Panc1 (cell line): ENCODE measurements at regions of chr10 and their contacts with region 1.

Region 1: GRCh38 chr10:101441541-101442455 is 87.8 kb downstream of the BTRC start:
- DNase-seq: peak; percentile 54
- ATAC-seq: peak; percentile 97
- H3K4me3 ChIP-seq: no peak overlapping the region
- H3K27ac ChIP-seq: no peak overlapping the region
- H3K4me1 ChIP-seq: peaks cover 6% of the 10 kb centered on the region; the same call in 1 of the 2 replicates
- H3K27me3 ChIP-seq: no peaks in the 10 kb centered on the region
- CTCF ChIP-seq: peak; percentile 88

Region 2: DNA sequence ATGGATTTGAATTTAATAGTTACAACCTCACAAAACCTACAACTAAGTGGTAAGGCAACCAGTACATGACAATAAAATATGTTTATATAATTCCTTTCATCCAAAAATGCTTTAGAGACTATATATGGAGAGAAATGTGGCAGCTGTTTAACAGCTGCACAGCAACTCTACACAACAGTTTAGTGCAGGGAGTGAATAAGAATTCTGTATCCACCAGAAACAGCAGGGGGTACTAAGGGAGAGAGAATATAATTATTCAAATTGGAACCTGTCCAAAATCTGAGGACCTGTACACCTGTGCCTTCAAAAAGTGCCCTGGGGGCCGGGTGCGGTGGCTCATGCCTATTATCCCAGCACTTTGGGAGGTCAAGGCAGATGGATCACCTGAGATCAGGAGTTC is 96.6 kb after region 1 on chr10:
- CTCF ChIA-PET with region 1: interaction called, 12 read pairs
- POLR2A ChIA-PET with region 1: no interaction called
- in situ Hi-C with region 1: no loop called
- intact Hi-C with region 1: no loop called
- DNase-seq: no peak
- ATAC-seq: no peak
- H3K4me3 ChIP-seq: no peak overlapping the region
- H3K27ac ChIP-seq: no peak overlapping the region
- H3K4me1 ChIP-seq: no peaks in the 10 kb centered on the region
- H3K27me3 ChIP-seq: no peaks in the 10 kb centered on the region
- CTCF ChIP-seq: no peak